A549 (cell line): ENCODE measurements at regions of chr11 and their contacts with region 1.

Region 1: GRCh38 chr11:727859-728748 is 19.2 kb upstream of the TALDO1 start:
- DNase-seq: peak; percentile 93 to 94
- ATAC-seq: peak; percentile 85 to 90
- H3K4me3 ChIP-seq: no peak overlapping the region
- H3K27ac ChIP-seq: peak overlapping the region; percentile 79 to 93
- H3K4me1 ChIP-seq: peaks cover 47% of the 10 kb centered on the region
- CTCF ChIP-seq: peak; percentile 99
- EP300 ChIP-seq: no peak
- POLR2A ChIP-seq: peak; percentile 10; the same call in 1 of the 2 replicates
- RAD21 ChIP-seq: peak; percentile 73 to 86

Region 2: GRCh38 chr11:554824-555472 is 173.2 kb before region 1 on chr11:
- CTCF ChIA-PET with region 1: interaction called, 44 read pairs
- POLR2A ChIA-PET with region 1: no interaction called
- DNase-seq: peak; percentile 69 to 81
- ATAC-seq: peak; percentile 48 to 72; a peak in 5 of 6 replicates
- H3K4me3 ChIP-seq: peak overlapping the region; percentile 67
- H3K27ac ChIP-seq: peak overlapping the region; percentile 81 to 88
- H3K4me1 ChIP-seq: peaks cover 22% of the 10 kb centered on the region
- CTCF ChIP-seq: peak; percentile 52
- EP300 ChIP-seq: no peak
- POLR2A ChIP-seq: no peak
- RAD21 ChIP-seq: peak; percentile 71 to 84

Region 3: GRCh38 chr11:662689-663274 is 65.3 kb before region 1 on chr11:
- CTCF ChIA-PET with region 1: interaction called, 39 read pairs
- POLR2A ChIA-PET with region 1: no interaction called
- DNase-seq: peak; percentile 70 to 96
- ATAC-seq: peak; percentile 92 to 94
- H3K4me3 ChIP-seq: no peak overlapping the region
- H3K27ac ChIP-seq: no peak overlapping the region
- H3K4me1 ChIP-seq: peaks cover 6% of the 10 kb centered on the region; the same call in 1 of the 3 replicates
- CTCF ChIP-seq: peak; percentile 75
- EP300 ChIP-seq: no peak
- POLR2A ChIP-seq: no peak
- RAD21 ChIP-seq: peak; percentile 70 to 81

Region 4: DNA sequence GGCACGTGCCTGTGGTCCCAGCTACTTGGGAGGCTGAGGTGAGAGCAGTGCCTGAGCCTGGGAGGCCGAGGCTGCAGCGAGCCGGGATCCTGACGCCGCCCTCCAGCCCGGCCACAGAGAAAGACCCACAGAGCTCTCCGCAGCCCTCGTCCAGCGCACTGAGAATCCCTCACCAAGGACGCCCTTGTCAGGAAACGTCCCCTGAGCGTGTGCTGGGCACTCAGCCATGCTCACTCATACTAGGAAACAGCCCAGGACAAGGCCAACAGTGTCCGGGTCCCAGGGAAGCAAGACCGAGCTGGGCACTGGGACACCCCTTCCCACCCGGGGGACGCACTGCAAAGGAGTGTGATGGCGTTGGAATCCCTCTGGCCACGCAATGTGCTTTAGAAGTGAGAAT is 47.6 kb before region 1 on chr11:
- CTCF ChIA-PET with region 1: interaction called, 30 read pairs
- POLR2A ChIA-PET with region 1: no interaction called
- DNase-seq: no peak
- ATAC-seq: peak in 1 of 2 experiments; percentile 19; a peak in 1 of 6 replicates
- H3K4me3 ChIP-seq: no peak overlapping the region
- H3K27ac ChIP-seq: no peak overlapping the region
- H3K4me1 ChIP-seq: no peaks in the 10 kb centered on the region
- CTCF ChIP-seq: no peak
- EP300 ChIP-seq: no peak
- POLR2A ChIP-seq: no peak
- RAD21 ChIP-seq: no peak

Region 5: GRCh38 chr11:747158-748006 is 19.3 kb after region 1 on chr11 and contains the start of gene TALDO1:
- CTCF ChIA-PET with region 1: interaction called, 119 read pairs
- POLR2A ChIA-PET with region 1: interaction called, 3 read pairs
- DNase-seq: peak; percentile 88
- ATAC-seq: peak; percentile 94 to 95
- H3K4me3 ChIP-seq: peak within 1 kb of the TSS; percentile 99
- H3K27ac ChIP-seq: peak within 1 kb of the TSS; percentile 87 to 97
- H3K4me1 ChIP-seq: peaks cover 21% of the 10 kb centered on the region
- CTCF ChIP-seq: no peak; the same call in 2 of the 3 replicates
- EP300 ChIP-seq: no peak
- POLR2A ChIP-seq: peak; percentile 64
- RAD21 ChIP-seq: no peak
- polyA plus RNA-seq, gene TALDO1: 287 and 296 TPM in 2 replicates